Endothelial cell of umbilical vein (primary cell): ENCODE measurements at regions of chr9 and their contacts with region 1.

Region 1: GRCh38 chr9:18331808-18332209 is 142.1 kb upstream of the ADAMTSL1 start:
- DNase-seq: peak; percentile 99
- H3K4me3 ChIP-seq: no peak overlapping the region
- H3K27ac ChIP-seq: peak overlapping the region; percentile 85
- H3K4me1 ChIP-seq: peaks cover 40% of the 10 kb centered on the region
- H3K27me3 ChIP-seq: no peaks in the 10 kb centered on the region
- CTCF ChIP-seq: no peak
- POLR2A ChIP-seq: peak; percentile 57

Region 2: DNA sequence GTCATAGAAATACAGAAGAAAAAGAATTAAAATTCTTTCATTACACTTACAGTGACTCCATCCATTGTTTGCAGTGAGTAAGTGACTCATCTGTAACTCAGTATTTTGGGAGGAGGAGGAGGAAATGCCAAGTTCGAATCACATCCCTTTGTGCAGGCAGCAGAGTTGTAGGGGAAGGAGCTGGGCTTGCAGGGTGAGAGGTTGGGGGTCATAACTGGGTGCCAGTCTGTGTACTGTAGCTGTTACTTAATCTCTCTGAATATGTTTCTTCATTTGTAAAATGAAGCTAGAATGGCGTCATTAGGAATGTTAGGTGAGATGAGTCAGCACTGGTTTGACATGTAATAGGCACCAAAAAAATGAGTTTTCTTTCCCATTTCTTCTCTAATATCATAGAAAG is 93.6 kb before region 1 on chr9:
- CTCF ChIA-PET with region 1: no interaction called
- POLR2A ChIA-PET with region 1: no interaction called
- dilution Hi-C with region 1: no loop called
- intact Hi-C with region 1: loop called (anchors 1 kb)
- DNase-seq: peak; percentile 97
- H3K4me3 ChIP-seq: peak overlapping the region in 1 of 3 experiments; percentile 27
- H3K27ac ChIP-seq: peak overlapping the region; percentile 93
- H3K4me1 ChIP-seq: peaks cover 43% of the 10 kb centered on the region
- H3K27me3 ChIP-seq: no peaks in the 10 kb centered on the region
- CTCF ChIP-seq: no peak
- POLR2A ChIP-seq: no peak

Region 3: DNA sequence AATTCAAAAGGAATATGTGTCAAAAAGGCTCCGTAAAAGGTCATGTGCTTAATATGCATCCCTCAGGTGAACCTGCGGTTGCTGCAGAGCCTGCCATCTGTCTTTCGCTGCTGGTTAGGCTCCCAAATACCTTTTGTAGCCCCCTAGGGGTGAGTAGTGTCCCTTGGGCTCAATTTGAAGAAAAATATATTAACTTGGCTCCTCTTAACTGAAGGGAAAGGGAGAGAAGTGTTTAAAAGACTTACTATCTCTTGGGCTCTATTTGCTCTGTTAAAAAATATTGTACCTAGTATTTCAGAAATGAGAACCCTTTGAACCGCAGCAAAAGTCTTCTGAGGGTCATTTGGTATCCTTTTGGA is 34.3 kb before region 1 on chr9:
- CTCF ChIA-PET with region 1: no interaction called
- POLR2A ChIA-PET with region 1: no interaction called
- dilution Hi-C with region 1: no loop called
- intact Hi-C with region 1: loop called (anchors 1 kb)
- DNase-seq: no peak
- H3K4me3 ChIP-seq: no peak overlapping the region
- H3K27ac ChIP-seq: peak overlapping the region; percentile 64
- H3K4me1 ChIP-seq: peaks cover 15% of the 10 kb centered on the region
- H3K27me3 ChIP-seq: no peaks in the 10 kb centered on the region
- CTCF ChIP-seq: peak; percentile 32 to 52
- POLR2A ChIP-seq: no peak

Region 4: DNA sequence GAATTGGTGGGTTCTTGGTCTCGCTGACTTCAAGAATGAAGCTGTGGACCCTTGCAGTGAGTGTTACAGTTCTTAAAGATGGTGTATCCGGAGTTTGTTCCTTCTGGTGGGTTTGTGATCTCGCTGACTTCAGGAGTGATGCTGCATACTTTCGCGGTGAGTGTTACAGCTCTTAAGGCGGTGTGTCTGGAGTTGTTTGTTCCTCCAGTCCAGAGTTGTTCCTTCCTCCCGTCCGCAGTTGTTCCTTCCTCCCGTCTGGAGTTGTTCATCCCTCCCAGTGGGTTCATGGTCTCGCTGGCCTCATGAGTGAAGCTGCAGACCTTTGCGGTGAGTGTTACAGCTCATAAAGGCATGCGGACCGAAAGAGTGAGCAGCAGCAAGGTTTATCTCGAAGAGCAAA is 17.5 kb before region 1 on chr9:
- CTCF ChIA-PET with region 1: interaction called, 5 read pairs
- POLR2A ChIA-PET with region 1: interaction called, 3 read pairs
- dilution Hi-C with region 1: no loop called
- intact Hi-C with region 1: loop called (anchors 1 kb)
- DNase-seq: peak; percentile 50
- H3K4me3 ChIP-seq: no peak overlapping the region
- H3K27ac ChIP-seq: peak overlapping the region; percentile 18
- H3K4me1 ChIP-seq: no peaks in the 10 kb centered on the region
- H3K27me3 ChIP-seq: no peaks in the 10 kb centered on the region
- CTCF ChIP-seq: no peak
- POLR2A ChIP-seq: peak; percentile 21

Region 5: GRCh38 chr9:18359335-18359734 is 27.5 kb after region 1 on chr9:
- CTCF ChIA-PET with region 1: interaction called, 7 read pairs
- POLR2A ChIA-PET with region 1: interaction called, 6 read pairs
- dilution Hi-C with region 1: no loop called
- intact Hi-C with region 1: loop called (anchors 1 kb)
- DNase-seq: peak; percentile 92
- H3K4me3 ChIP-seq: peak overlapping the region in 1 of 3 experiments; percentile 59
- H3K27ac ChIP-seq: peak overlapping the region; percentile 100
- H3K4me1 ChIP-seq: peaks cover 31% of the 10 kb centered on the region
- H3K27me3 ChIP-seq: no peaks in the 10 kb centered on the region
- CTCF ChIP-seq: no peak
- POLR2A ChIP-seq: no peak

Region 6: GRCh38 chr9:18632632-18633403 is 301.0 kb after region 1 on chr9:
- CTCF ChIA-PET with region 1: no interaction called
- POLR2A ChIA-PET with region 1: no interaction called
- dilution Hi-C with region 1: no loop called
- intact Hi-C with region 1: loop called (anchors 5 kb)
- DNase-seq: peak; percentile 96
- H3K4me3 ChIP-seq: no peak overlapping the region
- H3K27ac ChIP-seq: peak overlapping the region; percentile 81
- H3K4me1 ChIP-seq: peaks cover 39% of the 10 kb centered on the region
- H3K27me3 ChIP-seq: no peaks in the 10 kb centered on the region
- CTCF ChIP-seq: no peak
- POLR2A ChIP-seq: no peak